PC-3 (cell line): ENCODE measurements at regions of chr3 and their contacts with region 1.

Region 1: DNA sequence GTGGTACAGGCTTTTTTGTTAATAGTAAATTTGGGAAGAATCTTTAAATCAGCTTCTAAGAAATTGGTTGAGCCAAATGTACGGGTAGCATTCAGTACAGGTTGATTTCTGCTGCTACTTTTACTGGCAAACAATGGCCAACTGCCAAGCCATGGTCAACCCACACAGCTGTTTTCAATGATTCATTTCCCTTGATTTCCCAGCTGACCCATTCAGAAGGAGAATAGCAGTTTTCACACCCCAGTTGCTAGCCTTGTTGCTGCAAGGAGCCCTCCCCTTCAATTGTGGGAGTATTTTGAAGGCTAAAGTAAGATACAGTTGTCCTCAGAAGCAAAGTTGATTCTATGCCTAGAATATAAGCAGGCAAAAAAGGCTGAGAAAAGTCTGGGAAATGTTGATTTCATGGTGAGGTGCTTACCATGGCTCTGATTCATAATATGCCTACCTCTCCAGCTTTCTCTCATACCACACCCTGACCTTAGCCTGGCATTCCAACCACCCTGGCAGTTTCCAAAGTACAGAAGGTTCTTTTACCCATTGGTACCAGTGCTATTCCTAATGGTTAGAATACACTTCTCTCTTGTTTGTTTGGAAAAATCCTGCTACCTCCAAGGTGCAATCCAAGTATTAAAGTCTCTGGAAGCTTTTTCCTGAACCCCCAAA is 320.3 kb upstream of the TGFBR2 start:
- DNase-seq: peak; percentile 93
- ATAC-seq: peak; percentile 66
- H3K4me3 ChIP-seq: no peak overlapping the region
- H3K27ac ChIP-seq: peak overlapping the region; percentile 81
- H3K4me1 ChIP-seq: peaks cover 57% of the 10 kb centered on the region
- H3K27me3 ChIP-seq: no peaks in the 10 kb centered on the region
- CTCF ChIP-seq: no peak

Region 2: DNA sequence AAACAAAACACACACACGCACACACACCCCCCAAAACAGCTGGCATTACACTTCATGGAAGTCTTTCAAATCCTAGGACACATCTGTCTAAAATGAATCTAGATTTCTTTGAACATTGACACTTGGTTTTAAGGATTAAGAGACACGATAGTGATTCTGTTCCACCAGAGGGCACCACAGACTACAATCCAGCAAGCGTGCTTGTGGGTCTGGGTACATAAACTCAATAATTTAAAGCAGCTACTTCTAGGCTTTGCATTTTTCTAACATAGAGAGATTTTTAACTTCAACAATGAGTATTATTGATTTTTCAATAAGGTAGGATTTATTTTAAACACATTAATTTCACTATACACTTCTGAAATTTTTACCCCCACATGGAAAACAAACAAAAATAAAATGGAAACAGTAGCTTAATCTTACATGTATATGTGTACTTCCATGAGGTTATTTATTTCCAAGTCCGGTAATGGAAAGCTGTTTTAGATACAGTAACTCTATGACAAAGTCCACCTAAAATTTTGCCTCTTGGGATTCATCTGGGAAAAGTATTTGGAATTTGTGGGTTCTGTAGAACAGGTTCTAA is 243.8 kb before region 1 on chr3:
- CTCF ChIA-PET with region 1: no interaction called
- POLR2A ChIA-PET with region 1: no interaction called
- intact Hi-C with region 1: loop called (anchors 5 kb)
- DNase-seq: peak; percentile 84
- ATAC-seq: peak; percentile 87
- H3K4me3 ChIP-seq: no peak overlapping the region
- H3K27ac ChIP-seq: no peak overlapping the region
- H3K4me1 ChIP-seq: no peaks in the 10 kb centered on the region
- H3K27me3 ChIP-seq: no peaks in the 10 kb centered on the region
- CTCF ChIP-seq: peak; percentile 93

Region 3: GRCh38 chr3:30347679-30348216 is 61.6 kb after region 1 on chr3:
- CTCF ChIA-PET with region 1: no interaction called
- POLR2A ChIA-PET with region 1: no interaction called
- intact Hi-C with region 1: loop called (anchors 2 kb)
- DNase-seq: peak; percentile 96
- ATAC-seq: peak; percentile 67
- H3K4me3 ChIP-seq: peak overlapping the region; percentile 10; the same call in 1 of the 2 replicates
- H3K27ac ChIP-seq: peak overlapping the region; percentile 98
- H3K4me1 ChIP-seq: peaks cover 89% of the 10 kb centered on the region
- H3K27me3 ChIP-seq: no peaks in the 10 kb centered on the region
- CTCF ChIP-seq: no peak

Region 4: DNA sequence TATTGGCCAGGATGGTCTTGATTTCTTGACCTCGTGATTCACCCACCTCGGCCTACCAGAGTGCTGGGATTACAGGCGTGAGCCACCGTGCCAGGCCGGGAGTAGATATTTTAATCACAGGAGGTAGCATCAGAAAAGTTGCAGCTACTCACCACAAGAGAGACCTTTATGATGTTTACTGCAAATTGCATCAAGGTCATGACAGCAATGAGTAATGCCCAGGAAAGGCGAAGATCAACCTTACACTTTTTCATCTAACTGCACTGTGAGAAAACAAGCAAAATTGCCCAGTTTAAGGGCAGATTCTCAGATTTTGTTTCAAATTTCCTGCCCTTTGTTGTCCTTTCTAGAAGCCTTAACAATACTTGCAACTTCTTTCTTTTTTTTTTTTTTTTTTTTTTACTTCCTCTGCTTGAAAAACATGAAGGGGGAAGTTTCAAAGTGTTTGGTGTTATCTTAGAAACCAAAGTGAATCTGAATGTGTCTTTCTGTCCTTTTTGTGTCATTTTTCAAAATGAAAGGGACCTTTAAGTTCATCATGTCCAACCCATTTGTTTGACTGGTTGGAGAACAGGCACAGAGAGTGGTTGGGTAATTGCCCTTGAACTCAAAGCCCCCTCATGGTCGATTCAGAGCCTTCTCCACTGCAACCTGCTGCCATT is 345.2 kb after region 1 on chr3:
- CTCF ChIA-PET with region 1: no interaction called
- POLR2A ChIA-PET with region 1: interaction called, 15 read pairs
- intact Hi-C with region 1: no loop called
- DNase-seq: peak; percentile 51
- ATAC-seq: peak; percentile 56
- H3K4me3 ChIP-seq: no peak overlapping the region
- H3K27ac ChIP-seq: peak overlapping the region; percentile 24
- H3K4me1 ChIP-seq: peaks cover 33% of the 10 kb centered on the region
- H3K27me3 ChIP-seq: no peaks in the 10 kb centered on the region
- CTCF ChIP-seq: no peak